Gastrocnemius medialis (tissue), 4 donors: ENCODE measurements at regions of chr21 and their contacts with region 1.

Region 1: GRCh38 chr21:36203617-36203917 is 46.9 kb downstream of the DOP1B start:
- DNase-seq: peak; percentile 51 to 55
- ATAC-seq: peak; percentile 44 to 48
- H3K4me3 ChIP-seq: no peak overlapping the region
- H3K27ac ChIP-seq: peak overlapping the region; percentile 85 to 92 (median 90)
- H3K4me1 ChIP-seq: peaks cover 29 to 40% of the 10 kb centered on the region in 2 donors
- H3K27me3 ChIP-seq: no peaks in the 10 kb centered on the region
- CTCF ChIP-seq: no peak
- POLR2A ChIP-seq: no peak

Region 2: GRCh38 chr21:36060159-36060921 is 143.2 kb before region 1 on chr21 and contains the start of gene SETD4:
- in situ Hi-C with region 1: no loop called
- intact Hi-C with region 1: loop called (anchors 1 kb)
- DNase-seq: peak; percentile 80 to 89
- ATAC-seq: peak; percentile 94
- H3K4me3 ChIP-seq: peak within 1 kb of the TSS; percentile 74 to 95 (median 86)
- H3K27ac ChIP-seq: peak within 1 kb of the TSS; percentile 89 to 95 (median 94)
- H3K4me1 ChIP-seq: peaks cover 22 to 24% of the 10 kb centered on the region in 2 donors
- H3K27me3 ChIP-seq: no peaks in the 10 kb centered on the region
- CTCF ChIP-seq: no peak
- POLR2A ChIP-seq: peak; percentile 71 to 77
- total RNA-seq, gene SETD4: 5.9 to 21.7 (median 16.7) TPM

Region 3: GRCh38 chr21:36188081-36188681 is 15.4 kb before region 1 on chr21:
- in situ Hi-C with region 1: no loop called
- intact Hi-C with region 1: loop called (anchors 2 kb)
- DNase-seq: peak; percentile 84 to 95
- ATAC-seq: peak; percentile 97 to 98
- H3K4me3 ChIP-seq: no peak overlapping the region
- H3K27ac ChIP-seq: peak overlapping the region; percentile 68 to 79 (median 74)
- H3K4me1 ChIP-seq: peaks cover 13 to 23% of the 10 kb centered on the region in 2 donors
- H3K27me3 ChIP-seq: no peaks in the 10 kb centered on the region
- CTCF ChIP-seq: no peak
- POLR2A ChIP-seq: no peak